ENCODE measurements at regions of chr22 and their contacts with region 1.

Region 1: DNA sequence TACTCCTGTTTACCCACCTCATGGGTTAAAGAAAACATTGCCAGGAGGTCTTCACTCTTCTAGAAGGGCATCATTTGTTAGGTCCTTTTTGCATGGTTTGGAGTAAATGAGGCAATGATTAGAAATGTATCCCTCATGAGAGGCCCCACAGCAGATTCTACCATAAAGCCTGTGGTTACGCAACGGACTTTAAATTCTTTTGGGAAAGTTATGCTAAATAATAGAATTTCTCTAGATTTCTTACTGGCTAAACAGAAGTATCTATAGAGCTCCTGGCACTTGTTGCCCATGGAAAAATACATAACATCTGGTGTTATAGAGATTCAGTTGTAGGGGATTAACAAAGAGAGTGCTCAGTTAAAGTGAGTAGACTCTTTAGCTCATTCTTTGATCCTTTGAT is 15.1 kb upstream of the ATXN10 start:
- H3K4me3 ChIP-seq: no peak overlapping the region
- H3K27ac ChIP-seq: no peak overlapping the region
- H3K4me1 ChIP-seq: no peaks in the 10 kb centered on the region
- CTCF ChIP-seq: no peak

Region 2: GRCh38 chr22:45645526-45646414 is 10.8 kb before region 1 on chr22:
- CTCF ChIA-PET with region 1: interaction called, 14 read pairs
- POLR2A ChIA-PET with region 1: no interaction called
- H3K4me3 ChIP-seq: no peak overlapping the region
- H3K27ac ChIP-seq: no peak overlapping the region
- H3K4me1 ChIP-seq: no peaks in the 10 kb centered on the region
- CTCF ChIP-seq: peak; percentile 84